Thyroid gland (tissue), 4 donors: ENCODE measurements at regions of chr2 and their contacts with region 1.

Region 1: DNA sequence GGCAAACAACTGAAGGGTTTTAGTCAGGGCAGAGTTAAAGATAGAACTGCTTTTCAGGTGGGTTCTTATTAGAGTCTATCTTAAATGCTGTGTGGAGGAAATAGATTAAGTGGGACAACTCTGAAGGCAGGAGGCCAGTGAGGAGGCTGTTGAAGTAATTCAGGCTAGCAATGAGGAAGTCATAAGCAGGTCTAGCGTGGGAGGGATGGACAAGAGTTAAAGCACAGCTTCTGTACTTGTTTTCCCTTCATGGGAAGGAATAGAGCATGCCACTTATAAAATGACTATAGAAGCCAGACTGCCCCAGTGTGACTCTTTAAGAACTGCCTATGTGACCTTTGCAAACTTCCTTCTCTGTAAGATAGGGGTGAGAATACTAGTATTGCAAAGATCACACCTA is 202.0 kb upstream of the LRRTM1 start:
- DNase-seq: no peak
- H3K4me3 ChIP-seq: no peak overlapping the region
- H3K27ac ChIP-seq: no peak overlapping the region
- H3K4me1 ChIP-seq: no peaks in the 10 kb centered on the region
- H3K27me3 ChIP-seq: no peaks in the 10 kb centered on the region
- CTCF ChIP-seq: no peak
- POLR2A ChIP-seq: no peak

Region 2: DNA sequence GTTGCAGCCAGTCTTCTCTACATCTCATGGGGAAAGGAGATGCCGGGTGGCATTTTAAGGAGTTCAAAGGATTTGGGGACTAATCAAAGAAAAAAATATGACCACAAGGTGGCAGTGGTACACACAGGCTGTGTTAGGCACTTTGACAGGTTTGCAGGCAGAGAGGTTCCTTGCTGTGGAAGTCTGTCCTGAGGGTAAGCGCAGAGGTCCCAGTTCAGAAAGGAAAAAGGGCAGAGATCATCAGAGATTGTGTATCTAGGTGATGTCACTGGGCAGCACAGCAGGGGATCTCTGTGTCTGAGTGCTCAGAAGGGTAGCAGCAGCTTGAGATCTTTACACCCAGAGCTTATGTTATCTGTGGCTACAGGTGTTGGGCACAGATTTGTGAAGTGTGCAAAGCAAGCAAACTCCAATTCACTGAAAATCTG is 433.4 kb before region 1 on chr2:
- intact Hi-C with region 1: loop called (anchors 10 kb)
- DNase-seq: peak; percentile 34 to 45
- H3K4me3 ChIP-seq: no peak overlapping the region
- H3K27ac ChIP-seq: no peak overlapping the region
- H3K4me1 ChIP-seq: peaks cover 6% of the 10 kb centered on the region in 2 donors
- H3K27me3 ChIP-seq: no peaks in the 10 kb centered on the region
- CTCF ChIP-seq: peak; percentile 34 to 76 (median 65)
- POLR2A ChIP-seq: no peak

Region 3: DNA sequence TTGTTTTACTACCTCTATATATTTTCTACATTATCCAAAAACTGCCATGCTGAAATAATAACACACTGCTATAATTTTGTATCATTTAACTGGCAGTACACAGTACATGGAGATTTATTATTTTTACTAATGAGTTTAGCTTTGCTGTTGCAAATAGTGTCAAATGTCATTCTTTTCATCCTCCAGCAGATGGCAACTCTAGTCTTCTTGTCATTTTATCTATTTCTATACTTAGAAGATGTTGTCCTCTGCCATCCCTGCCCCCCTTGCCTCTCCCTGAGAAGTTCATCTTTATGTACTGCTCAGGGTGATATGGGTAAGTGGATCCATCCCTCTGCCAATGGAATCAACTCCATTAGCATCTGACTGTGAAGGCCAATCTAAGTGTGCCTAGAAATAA is 180.3 kb before region 1 on chr2:
- intact Hi-C with region 1: loop called (anchors 5 kb)
- DNase-seq: peak; percentile 8 to 13
- H3K4me3 ChIP-seq: no peak overlapping the region
- H3K27ac ChIP-seq: no peak overlapping the region
- H3K4me1 ChIP-seq: peaks cover 0 to 4% of the 10 kb centered on the region in 2 donors
- H3K27me3 ChIP-seq: no peaks in the 10 kb centered on the region
- CTCF ChIP-seq: peak in 4 of 6 experiments; percentile 26 to 66 (median 53)
- POLR2A ChIP-seq: no peak

Region 4: DNA sequence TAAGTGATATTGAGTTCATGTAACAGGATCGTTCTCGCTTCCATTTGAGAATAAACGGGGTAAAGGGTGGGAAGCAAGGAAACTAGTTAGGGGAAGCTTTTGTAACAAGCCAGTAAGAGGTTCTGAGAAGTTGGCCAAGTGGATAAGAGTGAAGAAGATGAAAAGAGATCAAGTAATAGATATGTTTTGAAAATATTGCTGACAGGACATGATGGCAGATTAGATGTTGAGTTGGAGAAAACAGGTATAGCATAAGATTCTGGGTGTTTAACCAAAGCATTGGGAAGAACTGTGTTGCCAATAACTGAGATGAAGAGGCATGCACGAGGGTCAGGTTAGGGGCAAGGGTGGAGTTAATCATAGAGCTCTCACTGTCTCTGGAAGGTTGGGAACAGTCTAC is 128.0 kb after region 1 on chr2:
- intact Hi-C with region 1: no loop called
- DNase-seq: no peak
- H3K4me3 ChIP-seq: no peak overlapping the region
- H3K27ac ChIP-seq: no peak overlapping the region
- H3K4me1 ChIP-seq: no peaks in the 10 kb centered on the region
- H3K27me3 ChIP-seq: no peaks in the 10 kb centered on the region
- CTCF ChIP-seq: no peak
- POLR2A ChIP-seq: no peak